Cardiac septum (tissue), 1 donor: ENCODE measurements at regions of chr11 and their contacts with region 1.

Region 1: GRCh38 chr11:31397239-31397834 is 27.7 kb downstream of the DNAJC24 start:
- DNase-seq: no peak

Region 2: DNA sequence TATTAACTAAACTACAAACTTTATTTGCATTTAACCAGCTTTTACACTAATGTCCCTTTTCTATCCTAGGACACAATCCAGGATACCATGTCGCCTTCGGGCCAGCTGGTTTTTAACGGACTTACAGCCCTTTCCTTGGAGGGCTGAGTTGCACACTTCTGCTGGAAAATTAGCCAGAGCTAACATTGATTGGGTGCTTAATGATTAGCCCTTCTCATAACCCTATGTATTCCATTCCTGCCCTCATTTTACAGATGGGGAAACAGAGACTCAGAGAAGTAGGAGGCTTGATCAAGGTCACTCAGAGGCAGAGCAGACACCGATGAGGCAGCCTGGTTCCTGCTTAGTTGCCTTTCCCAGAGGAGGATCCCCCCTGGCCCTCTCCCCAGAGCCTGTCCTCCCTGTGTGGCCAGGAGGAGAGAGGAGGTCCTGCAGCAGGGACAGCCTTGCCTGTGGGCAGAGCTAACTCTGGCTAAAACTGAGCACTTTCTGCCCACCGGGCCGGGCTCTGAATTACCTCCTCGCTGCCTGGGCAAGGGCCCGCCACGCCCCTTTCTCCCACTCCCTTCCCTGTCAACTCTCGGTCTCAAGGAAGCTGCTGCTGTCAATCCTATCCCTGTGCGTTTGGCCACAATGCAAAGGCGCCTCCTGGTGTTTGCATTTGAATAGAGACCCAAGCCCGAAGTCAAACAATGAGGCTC is 473.4 kb after region 1 on chr11:
- intact Hi-C with region 1: loop called (anchors 5 kb)
- DNase-seq: no peak

Region 3: GRCh38 chr11:31958076-31958735 is 560.9 kb after region 1 on chr11:
- intact Hi-C with region 1: loop called (anchors 5 kb)
- DNase-seq: peak; percentile 78